ENCODE measurements at regions of chr6 and their contacts with region 1.

Region 1: DNA sequence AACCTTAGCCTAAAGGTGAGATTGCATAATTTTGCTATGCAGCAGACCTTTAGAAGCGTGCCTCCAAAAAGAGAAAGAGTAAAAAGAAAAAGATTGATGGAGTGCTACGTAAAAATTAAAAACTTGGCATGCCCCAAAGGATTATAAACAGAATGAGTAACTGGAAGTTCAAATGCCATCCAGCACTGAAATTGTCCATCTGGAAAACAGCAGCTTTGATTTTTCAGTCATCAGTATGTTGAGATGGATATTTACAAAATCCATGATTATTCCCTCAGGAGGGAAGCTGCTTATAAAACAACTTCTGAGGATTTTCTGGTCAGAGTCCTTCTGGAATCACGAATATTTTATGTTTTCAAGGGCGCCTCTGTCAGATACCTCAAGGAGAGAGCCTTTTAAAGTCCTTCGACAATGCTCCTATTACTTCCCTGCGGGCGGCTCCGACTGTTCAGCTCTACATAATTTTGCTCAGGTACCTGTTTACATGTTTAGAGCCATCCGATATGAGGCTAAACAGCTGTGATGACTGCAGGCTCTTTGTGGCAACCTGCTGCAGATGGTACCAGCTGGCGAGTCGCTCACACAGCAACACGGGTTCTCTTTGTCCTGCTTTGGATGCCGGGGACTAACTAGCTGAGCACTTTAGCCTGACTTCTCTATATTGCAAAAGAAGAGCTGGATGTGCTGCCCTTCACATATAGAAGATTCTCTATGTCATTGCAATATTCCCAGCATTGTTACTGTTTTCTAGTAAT is 83.3 kb downstream of the RCAN2 start:
- DNase-seq: no peak
- H3K4me3 ChIP-seq: no peak overlapping the region
- H3K27ac ChIP-seq: peak overlapping the region in 2 of 5 donors; percentile 43 to 74
- H3K4me1 ChIP-seq: peaks cover 5 to 53% (median 20%) of the 10 kb centered on the region in 4 donors
- H3K27me3 ChIP-seq: no peaks in the 10 kb centered on the region
- CTCF ChIP-seq: no peak
- EP300 ChIP-seq: no peak
- POLR2A ChIP-seq: no peak

Region 2: DNA sequence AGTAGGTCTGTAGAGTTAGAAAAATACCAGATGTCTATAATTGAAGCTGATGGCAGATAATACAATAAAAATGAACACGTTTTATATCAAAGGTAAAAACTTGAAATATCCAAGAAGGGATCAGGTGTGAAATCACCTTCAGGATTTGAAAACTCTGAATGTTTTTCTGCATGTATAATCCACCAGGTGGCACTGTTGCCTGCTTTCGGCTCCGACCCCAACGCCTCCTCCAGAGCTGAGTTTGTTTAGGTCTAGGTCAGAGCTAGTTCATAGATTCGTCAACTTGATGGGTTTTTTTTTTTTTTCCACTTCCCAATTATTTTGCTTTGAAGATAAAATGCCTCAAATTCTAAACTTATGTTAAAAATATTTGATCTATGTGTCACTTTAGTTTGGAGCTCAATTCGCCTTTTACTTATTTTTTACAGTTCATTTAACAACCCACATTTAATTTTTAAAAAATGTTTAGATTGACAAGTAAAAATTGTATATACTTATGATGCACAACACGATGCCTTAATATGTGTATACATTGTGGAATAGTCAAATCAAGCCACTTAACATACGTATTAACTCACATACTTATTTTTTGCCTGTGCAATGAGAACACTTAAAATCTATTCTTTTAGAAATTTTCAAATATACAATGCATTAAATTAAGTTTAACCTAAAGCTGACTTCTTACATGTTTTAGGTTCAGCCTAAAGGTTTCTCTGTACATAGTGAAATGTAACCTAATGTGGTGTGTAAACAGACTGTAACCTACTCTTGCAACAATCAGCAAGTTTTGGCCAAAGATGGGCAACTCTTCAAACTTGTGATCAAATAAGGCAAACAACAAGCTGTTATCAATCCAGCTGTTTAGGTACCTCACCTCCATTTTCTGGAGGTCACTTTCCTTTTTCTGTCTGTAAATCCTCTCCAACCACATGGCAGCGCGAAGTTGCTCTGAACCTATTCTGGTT is 317.6 kb before region 1 on chr6:
- intact Hi-C with region 1: loop called (anchors 10 kb)
- DNase-seq: peak; percentile 66 to 85
- H3K4me3 ChIP-seq: no peak overlapping the region
- H3K27ac ChIP-seq: no peak overlapping the region
- H3K4me1 ChIP-seq: no peaks in the 10 kb centered on the region
- H3K27me3 ChIP-seq: peaks cover 0 to 36% (median 4%) of the 10 kb centered on the region in 3 donors
- CTCF ChIP-seq: peak in 5 of 7 experiments; percentile 39 to 86 (median 74)
- EP300 ChIP-seq: no peak
- POLR2A ChIP-seq: no peak

Region 3: GRCh38 chr6:46221222-46221793 is 186.6 kb before region 1 on chr6:
- intact Hi-C with region 1: loop called (anchors 5 kb)
- DNase-seq: peak in 1 of 2 donors; percentile 78
- H3K4me3 ChIP-seq: no peak overlapping the region
- H3K27ac ChIP-seq: no peak overlapping the region
- H3K4me1 ChIP-seq: no peaks in the 10 kb centered on the region
- H3K27me3 ChIP-seq: no peaks in the 10 kb centered on the region
- CTCF ChIP-seq: peak in 5 of 7 experiments; percentile 61 to 72 (median 70)
- EP300 ChIP-seq: no peak
- POLR2A ChIP-seq: no peak

Region 4: GRCh38 chr6:46772762-46773161 is 364.8 kb after region 1 on chr6:
- intact Hi-C with region 1: no loop called
- DNase-seq: peak in 1 of 2 donors; percentile 42
- H3K4me3 ChIP-seq: no peak overlapping the region
- H3K27ac ChIP-seq: peak overlapping the region in 2 of 5 donors; percentile 57 to 62
- H3K4me1 ChIP-seq: no peaks in the 10 kb centered on the region
- H3K27me3 ChIP-seq: no peaks in the 10 kb centered on the region
- CTCF ChIP-seq: no peak
- EP300 ChIP-seq: no peak
- POLR2A ChIP-seq: no peak